ENCODE measurements at regions of chr15 and their contacts with region 1.

Region 1: GRCh38 chr15:74615508-74616365 is at the start of gene CLK3:
- DNase-seq: peak; percentile 99
- ATAC-seq: peak; percentile 90
- H3K4me3 Mint-ChIP-seq: peak within 1 kb of the TSS; percentile 93
- H3K27ac Mint-ChIP-seq: peak within 1 kb of the TSS; percentile 95
- H3K4me1 Mint-ChIP-seq: peaks cover 42% of the 10 kb centered on the region
- H3K27me3 Mint-ChIP-seq: no peaks in the 10 kb centered on the region
- total RNA-seq, gene CLK3: 130 to 175 TPM

Region 2: DNA sequence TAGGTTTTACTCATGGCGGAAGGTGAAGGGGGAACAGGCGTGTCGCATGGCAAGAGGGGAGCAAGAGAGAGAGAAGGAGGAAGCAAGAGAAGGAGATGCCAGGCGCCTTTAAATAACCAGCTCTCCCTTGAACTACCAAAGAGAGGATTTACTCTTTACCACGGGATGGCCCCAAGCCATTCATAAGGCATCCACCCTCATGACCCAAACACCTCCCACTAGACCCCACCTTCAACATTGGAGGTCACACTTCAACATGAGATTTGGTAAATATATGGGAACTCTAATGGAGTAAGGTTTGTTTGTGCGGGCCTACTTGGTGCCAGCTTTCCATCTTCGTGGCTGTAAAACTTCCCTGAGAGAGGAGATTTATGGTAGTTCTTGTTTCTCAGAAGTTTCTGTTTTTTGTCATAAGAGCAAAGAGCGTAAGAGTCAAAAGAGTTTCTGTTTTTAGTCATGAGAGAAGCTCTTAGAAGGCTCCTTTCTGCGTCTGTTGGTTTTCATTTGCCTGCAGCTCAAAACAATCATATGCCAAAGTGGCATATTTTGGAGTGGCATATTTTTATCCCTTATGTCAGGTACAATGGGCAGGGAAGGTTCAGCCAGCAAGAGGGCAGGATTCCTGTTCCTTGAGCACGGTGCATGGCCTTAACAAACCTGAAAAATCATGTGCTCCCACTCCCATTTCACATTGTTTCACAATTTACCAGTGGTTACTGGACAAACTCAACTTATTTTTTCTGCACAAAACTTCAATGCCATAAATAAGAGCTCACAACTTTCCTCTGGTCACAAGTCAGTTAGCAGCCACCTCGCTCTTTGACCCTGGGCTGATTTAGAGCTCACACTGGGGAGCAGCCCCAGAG is 608.7 kb before region 1 on chr15:
- CTCF ChIA-PET with region 1: no interaction called
- POLR2A ChIA-PET with region 1: no interaction called
- intact Hi-C with region 1: no loop called
- DNase-seq: peak; percentile 35
- ATAC-seq: peak; percentile 71
- H3K4me3 Mint-ChIP-seq: peak overlapping the region; percentile 36
- H3K27ac Mint-ChIP-seq: peak overlapping the region; percentile 96
- H3K4me1 Mint-ChIP-seq: peaks cover 61% of the 10 kb centered on the region
- H3K27me3 Mint-ChIP-seq: no peaks in the 10 kb centered on the region

Region 3: GRCh38 chr15:74373731-74374647 is 241.7 kb before region 1 on chr15:
- CTCF ChIA-PET with region 1: interaction called, 10 read pairs
- POLR2A ChIA-PET with region 1: interaction called, 3 read pairs
- intact Hi-C with region 1: loop called (anchors 1 kb)
- DNase-seq: peak; percentile 97
- ATAC-seq: peak; percentile 84
- H3K4me3 Mint-ChIP-seq: peak overlapping the region; percentile 76
- H3K27ac Mint-ChIP-seq: no peak overlapping the region
- H3K4me1 Mint-ChIP-seq: peaks cover 31% of the 10 kb centered on the region
- H3K27me3 Mint-ChIP-seq: peaks cover 7% of the 10 kb centered on the region

Region 4: DNA sequence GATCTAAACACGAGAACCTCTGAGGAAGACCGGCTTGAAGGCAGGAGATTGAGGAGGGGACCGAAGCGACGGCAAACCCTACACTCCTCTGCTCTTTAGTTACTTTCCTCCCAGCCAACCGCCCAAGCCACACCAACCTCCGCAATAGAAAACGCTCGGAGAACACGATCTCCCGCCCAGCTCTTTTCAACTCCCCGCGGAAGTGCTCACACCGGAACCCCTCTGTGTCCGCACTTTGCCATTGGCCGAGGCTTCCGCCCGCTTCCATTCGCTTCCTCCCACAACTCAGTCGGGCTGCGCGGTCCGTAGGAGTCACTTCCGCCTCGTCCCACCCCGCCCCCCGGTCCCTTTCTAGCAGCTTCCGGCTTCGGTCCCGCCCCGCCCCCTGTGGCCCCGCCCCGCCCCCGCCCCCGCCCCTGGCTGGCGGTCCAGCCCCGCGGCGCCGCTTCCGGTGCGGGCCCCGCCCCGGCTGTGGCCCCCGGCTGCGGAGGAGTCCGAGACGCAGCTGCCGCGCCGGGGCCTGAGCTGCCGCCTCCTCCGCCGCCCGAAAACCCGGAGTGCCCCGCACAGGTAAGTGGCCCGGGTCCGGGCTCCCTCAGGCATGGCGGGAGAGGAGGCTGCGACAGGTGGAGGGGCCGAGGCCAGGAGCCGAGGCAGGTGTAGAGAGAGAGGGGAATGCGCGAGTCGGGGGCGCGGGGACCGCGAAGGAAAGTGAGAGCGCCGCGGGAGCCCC is 74.8 kb before region 1 on chr15 and contains the start of gene ARID3B:
- CTCF ChIA-PET with region 1: interaction called, 13 read pairs
- POLR2A ChIA-PET with region 1: interaction called, 8 read pairs
- intact Hi-C with region 1: loop called (anchors 1 kb)
- DNase-seq: peak; percentile 99
- ATAC-seq: peak; percentile 88
- H3K4me3 Mint-ChIP-seq: peak within 1 kb of the TSS; percentile 94
- H3K27ac Mint-ChIP-seq: peak within 1 kb of the TSS; percentile 98
- H3K4me1 Mint-ChIP-seq: peaks cover 43% of the 10 kb centered on the region
- H3K27me3 Mint-ChIP-seq: peaks cover 2% of the 10 kb centered on the region
- total RNA-seq, gene ARID3B: 23.9 to 25.4 TPM

Region 5: GRCh38 chr15:74635228-74635627 is 19.5 kb after region 1 on chr15:
- CTCF ChIA-PET with region 1: interaction called, 170 read pairs
- POLR2A ChIA-PET with region 1: interaction called, 5 read pairs
- intact Hi-C with region 1: no loop called
- DNase-seq: peak; percentile 87
- ATAC-seq: peak; percentile 90
- H3K4me3 Mint-ChIP-seq: no peak overlapping the region
- H3K27ac Mint-ChIP-seq: no peak overlapping the region
- H3K4me1 Mint-ChIP-seq: no peaks in the 10 kb centered on the region
- H3K27me3 Mint-ChIP-seq: no peaks in the 10 kb centered on the region

Region 6: GRCh38 chr15:74781431-74782258 is 165.9 kb after region 1 on chr15 and contains the start of gene CSK:
- CTCF ChIA-PET with region 1: interaction called, 20 read pairs
- POLR2A ChIA-PET with region 1: interaction called, 4 read pairs
- intact Hi-C with region 1: no loop called
- DNase-seq: peak; percentile 84
- ATAC-seq: peak; percentile 27
- H3K4me3 Mint-ChIP-seq: peak within 1 kb of the TSS; percentile 89
- H3K27ac Mint-ChIP-seq: peak within 1 kb of the TSS; percentile 100
- H3K4me1 Mint-ChIP-seq: peaks cover 56% of the 10 kb centered on the region
- H3K27me3 Mint-ChIP-seq: no peaks in the 10 kb centered on the region
- total RNA-seq, gene CSK: 229 to 272 TPM

Region 7: DNA sequence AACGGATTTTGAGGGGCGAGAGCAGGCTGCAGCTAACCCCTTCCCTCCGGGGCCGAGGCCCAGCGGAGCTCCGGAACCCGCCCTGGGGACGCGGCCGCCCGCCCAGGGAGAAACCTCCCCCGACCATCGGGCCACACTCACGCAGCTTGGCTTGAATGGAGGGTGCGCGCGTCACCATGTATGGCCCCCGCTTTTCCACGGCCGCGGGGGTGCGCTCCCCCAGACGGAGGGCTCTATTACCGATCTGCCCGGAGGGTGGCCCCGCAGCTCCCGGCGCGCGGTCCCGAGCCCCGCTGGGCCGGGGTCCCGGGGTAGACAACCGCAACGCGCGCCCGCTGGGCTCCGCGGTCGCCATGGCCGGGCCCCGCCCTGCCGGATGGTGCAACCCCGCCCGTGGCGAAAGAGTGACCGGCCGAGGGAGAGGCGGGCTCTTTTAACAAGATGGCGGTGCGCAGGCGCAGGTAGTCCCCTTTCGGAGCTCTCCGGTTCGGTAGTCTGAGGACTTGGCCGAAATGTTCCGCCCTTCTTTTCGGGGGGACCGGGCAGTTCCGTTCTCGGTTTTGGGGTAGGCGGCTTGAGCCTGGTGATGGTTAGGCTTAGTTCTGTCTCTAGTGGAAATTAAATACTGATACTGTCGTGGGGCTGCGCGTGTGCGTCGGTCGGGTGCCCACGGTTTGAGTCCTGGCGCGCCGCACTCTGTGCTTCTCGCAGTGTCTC is 290.9 kb after region 1 on chr15 and contains the start of gene FAM219B:
- CTCF ChIA-PET with region 1: interaction called, 5 read pairs
- POLR2A ChIA-PET with region 1: interaction called, 4 read pairs
- intact Hi-C with region 1: loop called in 1 of 2 experiments (anchors 5 kb)
- DNase-seq: peak; percentile 88
- ATAC-seq: peak; percentile 88
- H3K4me3 Mint-ChIP-seq: peak within 1 kb of the TSS; percentile 92
- H3K27ac Mint-ChIP-seq: peak within 1 kb of the TSS; percentile 94
- H3K4me1 Mint-ChIP-seq: peaks cover 37% of the 10 kb centered on the region
- H3K27me3 Mint-ChIP-seq: no peaks in the 10 kb centered on the region
- total RNA-seq, gene FAM219B: 39.3 to 49.7 TPM

Region 8: DNA sequence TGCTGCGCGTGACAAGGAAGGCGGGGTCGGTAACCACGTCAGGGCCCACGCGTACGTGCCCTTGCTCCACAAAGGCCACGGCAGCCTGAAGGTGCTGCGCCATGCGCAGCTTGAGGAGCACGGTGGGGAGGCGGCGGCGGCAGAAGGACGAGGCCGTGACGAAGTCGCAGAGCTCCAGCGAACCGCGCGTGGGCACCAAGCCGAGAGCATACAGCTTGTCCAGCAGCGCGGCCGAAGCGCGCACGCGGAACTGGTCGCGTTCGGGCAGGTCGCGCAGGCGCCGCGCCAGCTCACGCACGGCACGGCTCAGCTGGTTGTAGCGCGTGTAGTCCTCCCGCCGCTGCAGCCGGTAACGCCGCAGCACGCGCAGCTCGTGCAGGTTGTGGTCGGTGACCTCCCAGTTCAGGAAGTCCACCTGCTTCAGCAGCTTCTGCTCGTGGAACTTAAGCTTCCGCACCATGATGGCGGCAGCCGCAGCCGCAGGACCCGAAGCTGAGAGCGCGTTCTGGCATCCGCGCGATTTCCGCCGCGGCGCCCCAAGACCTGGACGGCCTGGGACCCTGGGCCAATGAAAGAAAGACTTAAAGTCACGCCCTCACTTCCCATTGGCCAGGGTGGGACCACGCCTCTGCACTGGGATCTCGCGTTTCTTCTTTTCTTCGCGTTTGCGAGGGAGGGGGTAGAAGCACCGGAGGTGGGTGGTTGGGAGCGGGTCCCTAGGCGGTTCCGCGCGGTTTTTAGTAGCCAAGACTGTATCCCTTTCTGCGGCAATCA is 1024.2 kb after region 1 on chr15 and contains the start of gene IMP3:
- CTCF ChIA-PET with region 1: no interaction called
- POLR2A ChIA-PET with region 1: no interaction called
- intact Hi-C with region 1: loop called in 1 of 2 experiments (anchors 10 kb)
- DNase-seq: peak; percentile 96
- ATAC-seq: peak; percentile 92
- H3K4me3 Mint-ChIP-seq: peak within 1 kb of the TSS; percentile 99
- H3K27ac Mint-ChIP-seq: peak within 1 kb of the TSS; percentile 96
- H3K4me1 Mint-ChIP-seq: peaks cover 25% of the 10 kb centered on the region
- H3K27me3 Mint-ChIP-seq: no peaks in the 10 kb centered on the region
- total RNA-seq, gene IMP3: 80.3 to 87.5 TPM